ENCODE measurements at regions of chr15 and their contacts with region 1.

Region 1: GRCh38 chr15:26287381-26287780 is 424.3 kb upstream of the ATP10A start:
- DNase-seq: no peak
- H3K4me3 ChIP-seq: no peak overlapping the region
- H3K4me3 Mint-ChIP-seq: no peak overlapping the region
- H3K27ac ChIP-seq: no peak overlapping the region
- H3K27ac Mint-ChIP-seq: no peak overlapping the region
- H3K4me1 ChIP-seq: no peaks in the 10 kb centered on the region
- H3K4me1 Mint-ChIP-seq: no peaks in the 10 kb centered on the region
- H3K27me3 ChIP-seq: no peaks in the 10 kb centered on the region
- H3K27me3 Mint-ChIP-seq: peaks cover 0 to 3% (median 0%) of the 10 kb centered on the region in 3 donors
- CTCF ChIP-seq: no peak

Region 2: GRCh38 chr15:26340376-26340775 is 53.0 kb after region 1 on chr15:
- intact Hi-C with region 1: loop called in 1 of 2 experiments (anchors 10 kb)
- DNase-seq: no peak
- H3K4me3 ChIP-seq: no peak overlapping the region
- H3K4me3 Mint-ChIP-seq: no peak overlapping the region
- H3K27ac ChIP-seq: no peak overlapping the region
- H3K27ac Mint-ChIP-seq: no peak overlapping the region
- H3K4me1 ChIP-seq: no peaks in the 10 kb centered on the region
- H3K4me1 Mint-ChIP-seq: no peaks in the 10 kb centered on the region
- H3K27me3 ChIP-seq: no peaks in the 10 kb centered on the region
- H3K27me3 Mint-ChIP-seq: no peaks in the 10 kb centered on the region
- CTCF ChIP-seq: no peak